Dorsolateral prefrontal cortex (tissue), 120 donors: ENCODE measurements at regions of chr6 and their contacts with region 1.

Region 1: GRCh38 chr6:156794546-156795354 is 17.6 kb downstream of the ARID1B start:
- DNase-seq: no peak
- H3K4me3 ChIP-seq: peak overlapping the region in 12 of 59 donors; percentile 32 to 54 (median 50)
- H3K27ac ChIP-seq: peak overlapping the region in 1 of 59 donors; percentile 5
- H3K27me3 ChIP-seq: no peaks in the 10 kb centered on the region
- CTCF ChIP-seq: no peak

Region 2: GRCh38 chr6:156866220-156867015 is 71.7 kb after region 1 on chr6:
- intact Hi-C with region 1: loop called in 1 of 2 experiments (anchors 5 kb)
- DNase-seq: peak in 7 of 10 donors; percentile 29 to 63 (median 54)
- H3K4me3 ChIP-seq: no peak overlapping the region
- H3K27ac ChIP-seq: peak overlapping the region in 14 of 59 donors; percentile 0 to 41 (median 16)
- H3K27me3 ChIP-seq: no peaks in the 10 kb centered on the region
- CTCF ChIP-seq: peak in 26 of 56 donors; percentile 13 to 58 (median 32)

Region 3: DNA sequence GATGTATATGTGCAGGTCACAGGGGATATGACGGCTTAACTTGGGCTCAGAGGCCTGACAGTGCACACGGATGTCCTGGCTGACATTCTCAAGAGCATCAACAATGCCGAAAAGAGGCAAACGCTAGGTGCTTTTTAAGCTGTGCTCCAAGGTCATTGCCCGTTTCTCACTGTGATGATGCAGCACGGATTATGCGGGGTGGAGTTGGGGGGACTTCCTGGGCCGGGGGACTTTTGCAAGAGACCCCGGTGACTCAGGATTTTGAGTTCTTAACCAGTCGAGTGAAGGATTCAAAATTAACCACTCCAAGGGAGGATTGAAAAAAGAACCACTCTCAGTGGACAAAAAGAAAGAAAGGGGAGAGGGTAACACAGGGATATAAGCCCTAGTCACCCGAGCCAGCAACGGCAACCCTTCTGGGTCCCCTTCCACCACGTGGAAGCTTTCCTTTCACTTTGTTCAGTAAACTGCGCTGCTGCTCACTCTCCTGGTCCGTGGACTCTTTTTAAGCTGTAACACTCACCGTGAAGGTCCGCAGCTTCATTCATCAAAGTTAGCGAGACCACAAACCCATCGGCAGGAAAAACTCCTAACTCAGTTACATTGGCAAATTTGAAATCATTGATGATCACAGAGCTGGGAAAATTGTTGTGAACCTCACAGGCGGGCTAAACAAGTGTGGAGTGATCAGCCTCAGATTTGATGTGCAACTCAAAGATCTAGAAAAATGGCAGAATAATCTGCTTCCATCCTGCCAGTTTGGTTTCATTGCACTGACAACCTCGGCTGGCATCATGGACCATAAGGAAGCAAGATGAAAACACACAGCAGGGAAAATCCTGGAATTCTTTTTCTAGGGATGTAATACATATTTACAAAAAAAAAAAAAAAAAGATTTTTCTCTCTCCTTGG is 181.7 kb after region 1 on chr6:
- intact Hi-C with region 1: no loop called
- DNase-seq: no peak
- H3K4me3 ChIP-seq: peak overlapping the region; percentile 3 to 68 (median 47)
- H3K27ac ChIP-seq: peak overlapping the region in 9 of 59 donors; percentile 5 to 52 (median 16)
- H3K27me3 ChIP-seq: no peaks in the 10 kb centered on the region
- CTCF ChIP-seq: no peak